AG04450 (cell line): ENCODE measurements at regions of chr3 and their contacts with region 1.

Region 1: GRCh38 chr3:99023590-99024192 is 122.2 kb upstream of the DCBLD2 start:
- DNase-seq: peak; percentile 27
- H3K4me3 ChIP-seq: no peak overlapping the region
- H3K27ac ChIP-seq: no peak overlapping the region
- H3K27me3 ChIP-seq: no peaks in the 10 kb centered on the region
- CTCF ChIP-seq: peak; percentile 71

Region 2: GRCh38 chr3:98921957-98922356 is 101.7 kb before region 1 on chr3:
- CTCF ChIA-PET with region 1: interaction called, 10 read pairs
- POLR2A ChIA-PET with region 1: no interaction called
- DNase-seq: no peak
- H3K4me3 ChIP-seq: no peak overlapping the region
- H3K27ac ChIP-seq: no peak overlapping the region
- H3K27me3 ChIP-seq: no peaks in the 10 kb centered on the region
- CTCF ChIP-seq: no peak

Region 3: GRCh38 chr3:99753268-99753975 is 729.7 kb after region 1 on chr3:
- CTCF ChIA-PET with region 1: interaction called, 39 read pairs
- POLR2A ChIA-PET with region 1: no interaction called
- DNase-seq: peak; percentile 63
- H3K4me3 ChIP-seq: no peak overlapping the region
- H3K27ac ChIP-seq: no peak overlapping the region
- H3K27me3 ChIP-seq: no peaks in the 10 kb centered on the region
- CTCF ChIP-seq: peak; percentile 84

Region 4: DNA sequence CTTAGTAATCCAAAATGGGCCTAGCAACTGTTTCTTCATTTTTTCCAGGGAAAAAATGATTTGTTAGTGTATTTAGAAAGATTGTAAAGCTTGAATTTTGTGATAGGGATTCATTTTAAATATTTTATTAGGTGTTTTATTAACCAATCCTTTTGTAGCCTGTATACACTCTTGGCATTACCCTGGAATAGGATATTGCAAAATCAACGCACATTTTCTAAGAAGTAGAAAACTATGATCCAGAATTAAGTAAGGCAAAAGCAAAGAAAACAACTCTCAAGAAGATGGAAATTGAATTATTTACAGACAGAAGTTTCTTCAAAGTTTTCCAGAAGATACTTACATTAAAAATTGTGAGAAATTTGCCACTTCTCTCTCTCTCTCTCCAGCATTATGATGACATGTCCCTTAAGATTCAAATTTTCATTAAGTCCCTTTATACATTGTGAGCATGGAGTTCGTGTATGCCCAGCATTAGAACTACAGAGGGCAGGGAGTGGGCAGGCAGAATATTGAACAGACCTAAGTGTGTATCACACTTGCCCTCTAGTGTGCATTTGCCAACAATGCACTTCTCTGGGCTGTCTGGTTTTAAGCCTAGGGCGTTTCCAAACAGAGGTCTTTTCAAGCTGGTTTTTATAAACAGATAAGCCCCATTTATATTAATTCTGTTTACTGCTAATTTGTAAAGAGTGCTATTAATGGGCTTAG is 765.5 kb after region 1 on chr3:
- CTCF ChIA-PET with region 1: interaction called, 14 read pairs
- POLR2A ChIA-PET with region 1: no interaction called
- DNase-seq: peak; percentile 16
- H3K4me3 ChIP-seq: no peak overlapping the region
- H3K27ac ChIP-seq: no peak overlapping the region
- H3K27me3 ChIP-seq: no peaks in the 10 kb centered on the region
- CTCF ChIP-seq: peak; percentile 84

Region 5: DNA sequence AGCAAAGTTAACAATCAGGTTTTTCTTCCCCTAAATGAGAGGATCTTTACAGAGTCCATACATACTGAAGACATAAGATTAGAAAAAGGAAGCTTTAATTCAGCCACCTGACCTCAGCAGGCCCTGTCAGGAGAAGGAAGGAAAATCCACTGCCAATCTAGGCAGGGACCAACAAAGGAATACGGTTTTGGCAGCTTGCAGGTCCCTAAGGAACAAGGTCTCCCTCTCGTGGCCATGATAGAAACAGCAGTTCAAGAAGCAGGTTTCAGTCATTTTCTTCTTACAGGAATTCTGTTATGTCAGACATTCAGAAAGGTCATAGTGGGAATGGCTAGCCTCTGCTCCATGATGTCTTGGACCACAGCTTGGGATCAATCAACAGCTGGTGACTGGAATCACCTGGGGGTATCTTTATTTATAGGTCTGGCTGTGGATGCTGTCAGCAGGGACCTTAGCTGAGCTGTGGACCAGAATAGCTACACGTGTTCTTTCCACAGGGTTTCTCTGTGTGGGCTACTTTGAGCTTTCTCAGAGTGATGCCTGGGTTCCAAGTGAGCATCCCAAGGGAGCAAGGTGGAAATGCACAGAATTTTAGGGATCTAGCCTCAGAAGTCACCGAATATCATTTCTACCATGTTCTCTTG is 784.6 kb after region 1 on chr3:
- CTCF ChIA-PET with region 1: interaction called, 17 read pairs
- POLR2A ChIA-PET with region 1: no interaction called
- DNase-seq: peak; percentile 71
- H3K4me3 ChIP-seq: no peak overlapping the region
- H3K27ac ChIP-seq: no peak overlapping the region
- H3K27me3 ChIP-seq: no peaks in the 10 kb centered on the region
- CTCF ChIP-seq: peak; percentile 93